ENCODE measurements at regions of chr12 and their contacts with region 1.

Region 1: DNA sequence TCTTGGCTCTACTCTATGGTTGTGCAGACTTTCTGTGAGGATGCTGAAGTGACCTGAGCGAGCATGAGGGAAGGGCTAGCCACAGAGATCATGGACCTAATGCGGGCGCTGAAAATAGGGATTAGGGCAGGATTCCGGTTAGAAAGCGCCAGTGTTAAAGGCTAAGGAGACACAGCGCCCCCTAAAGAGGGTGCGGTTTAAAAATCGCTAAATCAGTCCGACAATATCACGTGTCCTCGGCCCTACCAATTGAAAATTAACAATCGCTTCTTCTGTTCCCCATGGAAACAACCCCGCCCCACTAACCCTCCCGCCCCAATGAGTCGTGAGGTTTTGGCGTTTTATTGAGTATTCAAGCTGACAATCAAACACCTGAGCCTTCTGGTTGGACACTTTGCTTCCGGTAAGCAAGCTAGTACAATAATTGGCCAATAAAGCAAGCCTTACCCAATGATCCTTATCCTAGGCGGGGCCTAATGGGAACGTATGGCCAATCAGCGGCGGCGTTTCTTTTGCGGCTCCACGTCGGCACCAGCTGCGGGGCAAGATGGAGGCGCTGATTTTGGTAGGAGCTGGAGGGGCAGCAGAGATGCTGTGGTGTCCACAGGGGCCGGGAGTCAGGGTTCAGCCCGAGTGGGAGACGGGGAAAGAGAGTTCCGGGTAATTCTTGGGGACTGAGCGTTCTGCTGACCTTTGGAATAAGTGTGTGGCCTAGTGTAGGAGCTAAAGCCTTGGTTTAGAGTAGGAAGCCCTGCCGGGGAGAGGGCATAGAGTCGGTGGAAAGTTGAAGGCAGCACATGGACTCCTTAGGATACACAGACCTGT is at the start of gene COPZ1:
- DNase-seq: peak; percentile 99
- ATAC-seq: peak; percentile 99
- H3K4me3 ChIP-seq: peak within 1 kb of the TSS; percentile 98
- H3K27ac ChIP-seq: peak within 1 kb of the TSS; percentile 84
- H3K4me1 ChIP-seq: no peaks in the 10 kb centered on the region; the same call in 1 of the 2 replicates
- H3K27me3 ChIP-seq: no peaks in the 10 kb centered on the region
- CTCF ChIP-seq: peak; percentile 73 to 88 (median 77)
- EP300 ChIP-seq: no peak
- POLR2A ChIP-seq: peak; percentile 91
- RAD21 ChIP-seq: peak; percentile 52; the same call in 1 of the 2 replicates
- polyA plus RNA-seq, gene COPZ1: 260 to 378 TPM

Region 2: DNA sequence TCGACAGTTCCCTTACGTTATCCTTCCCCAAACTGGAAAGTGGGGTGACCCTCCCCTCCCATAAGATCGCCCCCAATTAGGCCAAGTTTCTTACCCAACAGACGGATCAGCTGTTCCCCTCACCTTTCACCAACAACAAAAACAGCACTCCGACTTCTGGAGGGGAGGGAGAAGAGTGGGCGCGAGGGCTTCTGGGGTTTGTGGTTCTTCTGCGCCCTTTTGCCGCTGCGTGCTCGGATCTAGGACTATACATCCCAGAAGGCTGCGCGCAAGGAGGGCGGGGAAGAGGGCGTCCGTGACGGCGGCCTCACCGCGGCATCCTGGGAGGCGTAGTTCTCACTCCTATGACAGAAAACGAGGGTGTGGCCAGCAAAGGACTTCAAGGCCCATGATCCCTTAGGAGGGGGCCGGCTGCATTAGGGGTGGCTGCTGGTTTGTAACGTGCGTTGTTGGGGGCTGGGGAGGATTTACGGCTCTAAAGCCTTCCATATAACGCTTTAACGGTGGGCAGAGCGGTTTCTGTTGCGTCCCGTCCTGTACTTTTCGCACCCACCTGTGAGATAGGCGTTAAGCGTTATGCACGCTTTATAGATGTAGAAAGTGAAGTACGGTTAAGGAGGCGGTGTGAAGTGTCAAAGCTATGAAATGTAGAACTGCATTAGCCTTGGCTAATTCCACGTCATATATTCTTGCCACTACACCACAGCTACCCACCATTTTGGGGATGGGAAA is 597.4 kb before region 1 on chr12 and contains the start of gene CALCOCO1:
- CTCF ChIA-PET with region 1: no interaction called
- POLR2A ChIA-PET with region 1: no interaction called
- RAD21 ChIA-PET with region 1: no interaction called
- SMC1A ChIA-PET with region 1: no interaction called
- in situ Hi-C with region 1: no loop called
- intact Hi-C with region 1: no loop called
- DNase-seq: peak; percentile 95
- ATAC-seq: peak; percentile 99
- H3K4me3 ChIP-seq: peak within 1 kb of the TSS; percentile 74
- H3K27ac ChIP-seq: 0 out of 2 replicates have a peak within 1 kb of the TSS, but pooled peaks have one; percentile 24
- H3K4me1 ChIP-seq: peaks cover 17% of the 10 kb centered on the region
- H3K27me3 ChIP-seq: no peaks in the 10 kb centered on the region; a peak in 1 of 4 replicates
- CTCF ChIP-seq: no peak
- EP300 ChIP-seq: no peak; a peak in 2 of 4 replicates
- POLR2A ChIP-seq: peak; percentile 68
- RAD21 ChIP-seq: no peak
- polyA plus RNA-seq, gene CALCOCO1: 2.8 to 4.4 TPM

Region 3: GRCh38 chr12:54259194-54260011 is 65.4 kb before region 1 on chr12:
- CTCF ChIA-PET with region 1: interaction called, 26 read pairs
- POLR2A ChIA-PET with region 1: interaction called, 3 read pairs
- RAD21 ChIA-PET with region 1: interaction called, 10 read pairs
- SMC1A ChIA-PET with region 1: interaction called, 5 read pairs
- in situ Hi-C with region 1: no loop called
- intact Hi-C with region 1: no loop called
- DNase-seq: peak; percentile 42
- ATAC-seq: peak; percentile 97
- H3K4me3 ChIP-seq: peak overlapping the region; percentile 48
- H3K27ac ChIP-seq: peak overlapping the region; percentile 30
- H3K4me1 ChIP-seq: peaks cover 17% of the 10 kb centered on the region
- H3K27me3 ChIP-seq: no peaks in the 10 kb centered on the region
- CTCF ChIP-seq: no peak
- EP300 ChIP-seq: peak in 1 of 2 experiments; percentile 56; a peak in 1 of 4 replicates
- POLR2A ChIP-seq: no peak
- RAD21 ChIP-seq: no peak

Region 4: DNA sequence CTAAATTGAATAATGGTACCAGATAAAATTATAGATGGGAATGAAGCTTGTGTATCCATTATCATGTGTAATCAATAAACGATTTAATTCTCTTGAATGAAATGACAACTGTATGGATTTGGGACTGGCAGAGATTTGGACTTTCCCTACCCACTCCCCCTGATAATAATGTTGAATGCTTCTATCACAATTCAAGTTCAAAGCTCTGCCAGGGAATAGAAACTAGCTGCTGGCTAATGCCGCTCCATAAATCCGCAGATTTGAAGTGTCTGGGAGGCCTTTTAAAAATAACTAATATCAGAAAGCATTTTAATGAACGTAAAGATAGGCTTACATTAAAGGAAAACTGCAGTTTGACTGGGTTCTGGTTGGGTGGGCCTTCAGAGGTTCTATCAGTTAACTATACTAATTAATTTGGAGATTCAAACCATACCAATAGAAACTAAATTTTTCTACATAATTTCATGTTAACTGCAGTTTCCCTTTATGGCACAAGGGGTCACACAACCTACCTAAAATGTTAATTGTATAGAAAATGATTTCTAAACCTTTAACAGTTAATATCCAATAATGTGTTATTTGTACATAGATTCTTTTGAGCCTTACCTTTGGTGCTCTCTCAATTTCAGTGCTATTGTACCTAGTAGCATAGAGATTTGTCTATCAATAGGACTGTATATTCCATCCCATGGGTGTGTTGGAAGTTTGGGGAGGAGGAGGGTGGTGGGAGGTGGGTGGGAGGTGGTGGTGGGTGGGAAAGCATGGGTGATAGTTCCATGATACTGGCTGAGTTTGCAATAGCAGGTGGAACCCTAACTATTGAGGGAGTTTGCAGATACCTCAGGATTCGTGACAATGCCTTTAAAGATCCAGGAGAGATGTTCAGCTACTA is 39.4 kb before region 1 on chr12:
- CTCF ChIA-PET with region 1: interaction called, 63 read pairs
- POLR2A ChIA-PET with region 1: interaction called, 31 read pairs
- RAD21 ChIA-PET with region 1: interaction called, 24 read pairs
- SMC1A ChIA-PET with region 1: interaction called, 4 read pairs
- in situ Hi-C with region 1: no loop called
- intact Hi-C with region 1: no loop called
- DNase-seq: no peak
- ATAC-seq: no peak
- H3K4me3 ChIP-seq: peak overlapping the region; percentile 37; the same call in 1 of the 2 replicates
- H3K27ac ChIP-seq: no peak overlapping the region
- H3K4me1 ChIP-seq: peaks cover 3% of the 10 kb centered on the region; the same call in 1 of the 2 replicates
- H3K27me3 ChIP-seq: no peaks in the 10 kb centered on the region
- CTCF ChIP-seq: peak in 1 of 3 experiments; percentile 23; a peak in 3 of 6 replicates
- EP300 ChIP-seq: no peak
- POLR2A ChIP-seq: no peak
- RAD21 ChIP-seq: no peak

Region 5: DNA sequence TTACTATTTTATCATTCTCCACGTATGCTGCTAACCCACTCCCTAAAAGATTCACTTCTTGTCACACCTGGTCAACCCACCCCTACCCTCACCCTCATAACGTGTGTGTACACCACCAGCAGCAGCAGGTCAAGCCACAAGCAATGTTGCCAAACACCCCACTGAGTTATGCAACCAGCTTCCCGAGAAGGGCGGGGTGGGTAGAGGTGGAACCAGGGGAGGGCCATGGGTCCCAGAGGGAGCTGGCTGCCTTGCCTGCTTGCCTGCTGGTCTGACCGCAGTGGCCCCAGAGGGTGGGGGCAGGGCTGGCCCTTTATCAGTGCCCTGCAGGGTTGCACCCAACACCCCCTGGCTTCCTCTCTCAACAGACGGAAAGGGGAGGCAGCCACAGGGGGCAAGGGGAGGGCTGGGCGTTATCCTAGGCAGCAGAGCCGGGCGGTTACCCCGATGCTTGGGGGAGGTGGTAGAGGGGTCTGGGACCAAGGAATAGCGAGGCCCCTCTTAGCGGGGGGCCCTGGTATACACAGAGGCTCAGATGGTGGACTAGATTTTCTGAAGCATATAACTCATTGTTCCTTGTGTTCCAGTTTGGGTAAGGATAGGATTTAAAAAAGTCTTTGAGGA is 20.5 kb before region 1 on chr12:
- CTCF ChIA-PET with region 1: interaction called, 11 read pairs
- POLR2A ChIA-PET with region 1: interaction called, 3 read pairs
- RAD21 ChIA-PET with region 1: interaction called, 4 read pairs
- SMC1A ChIA-PET with region 1: interaction called, 5 read pairs
- in situ Hi-C with region 1: no loop called
- intact Hi-C with region 1: no loop called
- DNase-seq: no peak
- ATAC-seq: peak; percentile 81
- H3K4me3 ChIP-seq: no peak overlapping the region
- H3K27ac ChIP-seq: no peak overlapping the region
- H3K4me1 ChIP-seq: 0 out of 2 replicates have a peak, but pooled peaks cover 3% of the 10 kb centered on the region
- H3K27me3 ChIP-seq: peaks cover 14 to 25% of the 10 kb centered on the region in 2 experiments
- CTCF ChIP-seq: no peak
- EP300 ChIP-seq: no peak
- POLR2A ChIP-seq: no peak
- RAD21 ChIP-seq: no peak

Region 6: DNA sequence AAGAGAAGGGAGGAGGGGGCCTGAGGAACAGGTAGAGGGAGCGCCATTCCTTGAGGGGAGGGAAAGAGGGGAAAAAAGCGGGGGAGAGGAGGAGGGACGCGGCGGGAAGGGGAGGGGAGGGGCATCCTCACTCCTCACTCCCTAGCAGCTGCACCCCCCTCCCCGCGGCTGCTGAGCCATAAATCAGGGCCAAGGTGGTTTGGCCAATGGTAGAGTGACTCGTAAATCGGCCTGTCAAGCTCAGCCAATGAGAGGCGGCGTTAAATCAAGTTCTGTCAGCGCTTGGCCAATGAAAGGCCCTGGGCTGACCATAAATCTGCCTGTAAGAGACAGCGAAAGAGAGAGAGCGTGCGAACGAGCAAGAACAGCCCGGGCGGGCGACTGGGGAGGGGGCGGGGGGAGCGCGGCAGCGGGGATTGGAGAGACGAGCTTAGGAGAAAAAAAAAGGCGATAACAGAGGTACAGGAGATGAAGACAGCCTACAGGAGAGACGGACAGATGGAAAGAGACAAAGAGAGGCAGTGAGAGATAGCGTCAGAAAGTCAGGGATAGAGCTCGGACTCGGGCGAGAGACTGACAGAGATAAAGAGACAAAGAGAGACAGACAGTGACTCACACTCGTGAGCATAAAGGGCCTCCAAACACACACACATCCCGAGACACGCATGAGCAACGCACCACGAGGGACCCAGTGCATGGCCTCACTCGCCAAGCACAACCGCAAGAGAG is 34.4 kb after region 1 on chr12:
- CTCF ChIA-PET with region 1: interaction called, 23 read pairs
- POLR2A ChIA-PET with region 1: interaction called, 9 read pairs
- RAD21 ChIA-PET with region 1: interaction called, 22 read pairs
- SMC1A ChIA-PET with region 1: interaction called, 10 read pairs
- in situ Hi-C with region 1: no loop called
- intact Hi-C with region 1: loop called (anchors 2 kb)
- DNase-seq: peak; percentile 97
- ATAC-seq: peak; percentile 96
- H3K4me3 ChIP-seq: peak overlapping the region; percentile 84
- H3K27ac ChIP-seq: peak overlapping the region; percentile 92
- H3K4me1 ChIP-seq: peaks cover 23% of the 10 kb centered on the region
- H3K27me3 ChIP-seq: no peaks in the 10 kb centered on the region
- CTCF ChIP-seq: no peak
- EP300 ChIP-seq: peak in 1 of 2 experiments; percentile 55; a peak in 2 of 4 replicates
- POLR2A ChIP-seq: peak; percentile 63
- RAD21 ChIP-seq: no peak

Region 7: GRCh38 chr12:54379401-54380201 is 54.8 kb after region 1 on chr12:
- CTCF ChIA-PET with region 1: interaction called, 15 read pairs
- POLR2A ChIA-PET with region 1: no interaction called
- RAD21 ChIA-PET with region 1: interaction called, 4 read pairs
- SMC1A ChIA-PET with region 1: interaction called, 3 read pairs
- in situ Hi-C with region 1: no loop called
- intact Hi-C with region 1: no loop called
- DNase-seq: no peak
- ATAC-seq: peak; percentile 95
- H3K4me3 ChIP-seq: no peak overlapping the region
- H3K27ac ChIP-seq: no peak overlapping the region
- H3K4me1 ChIP-seq: peaks cover 4% of the 10 kb centered on the region
- H3K27me3 ChIP-seq: no peaks in the 10 kb centered on the region
- CTCF ChIP-seq: peak; percentile 100; a peak in 5 of 6 replicates
- EP300 ChIP-seq: no peak
- POLR2A ChIP-seq: no peak
- RAD21 ChIP-seq: peak; percentile 73

Measured in GM12878 (cell line).